ENCODE measurements at regions of chr7 and their contacts with region 1.

Region 1: DNA sequence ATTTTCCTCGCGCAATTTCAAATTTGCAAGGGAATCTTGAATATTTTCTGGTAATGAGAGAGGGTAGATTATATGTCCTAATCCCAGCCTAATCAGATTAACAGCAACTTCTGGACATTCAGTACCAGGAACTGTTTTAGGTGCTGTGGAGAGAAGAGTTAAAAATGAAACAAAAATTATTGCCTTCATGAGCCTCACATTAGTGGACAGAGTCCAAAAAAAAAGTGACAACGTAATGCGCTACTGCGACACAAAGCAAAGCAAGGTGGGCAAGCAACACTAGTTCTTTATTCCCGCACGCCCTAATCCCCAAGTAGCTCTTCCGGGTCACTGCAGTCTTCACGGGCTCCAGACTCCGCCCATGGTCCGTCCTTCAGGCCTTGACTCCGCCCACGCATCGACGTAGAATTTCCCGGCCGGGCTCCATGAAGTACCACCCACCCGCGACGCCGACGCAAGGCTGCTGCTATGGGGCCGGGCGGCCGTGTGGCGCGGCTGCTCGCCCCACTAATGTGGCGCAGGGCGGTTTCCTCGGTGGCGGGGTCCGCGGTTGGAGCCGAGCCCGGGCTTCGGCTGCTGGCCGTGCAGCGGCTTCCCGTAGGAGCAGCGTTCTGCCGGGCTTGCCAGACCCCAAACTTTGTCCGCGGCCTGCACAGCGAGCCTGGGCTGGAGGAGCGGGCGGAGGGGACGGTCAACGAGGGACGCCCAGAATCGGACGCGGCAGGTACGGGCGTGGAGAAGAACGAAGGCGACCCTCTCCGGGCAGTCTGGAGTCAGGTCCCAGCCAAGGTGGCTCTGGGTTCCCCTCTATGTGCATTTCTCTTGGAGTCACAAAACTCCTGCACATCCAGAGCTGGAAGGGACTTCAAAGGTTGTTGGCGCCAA is at the start of gene MALSU1:
- DNase-seq: peak; percentile 90 to 96 (median 94)
- ATAC-seq: peak; percentile 100
- H3K4me3 ChIP-seq: peak within 1 kb of the TSS; percentile 96
- H3K4me3 Mint-ChIP-seq: peak within 1 kb of the TSS; percentile 90 to 97 (median 94)
- H3K27ac ChIP-seq: peak within 1 kb of the TSS; percentile 92
- H3K27ac Mint-ChIP-seq: peak within 1 kb of the TSS; percentile 96 to 100 (median 98)
- H3K4me1 ChIP-seq: peaks cover 14 to 23% of the 10 kb centered on the region in 2 donors
- H3K4me1 Mint-ChIP-seq: peaks cover 34 to 55% (median 48%) of the 10 kb centered on the region in 7 donors
- H3K27me3 ChIP-seq: no peaks in the 10 kb centered on the region
- H3K27me3 Mint-ChIP-seq: peaks cover 0 to 10% (median 0%) of the 10 kb centered on the region in 5 donors
- total RNA-seq, gene MALSU1: 32.7 to 48.3 (median 44.8) TPM

Region 2: GRCh38 chr7:23181684-23182553 is 117.2 kb before region 1 on chr7 and contains the start of gene NUP42:
- CTCF ChIA-PET with region 1: no interaction called
- POLR2A ChIA-PET with region 1: no interaction called
- intact Hi-C with region 1: loop called (anchors 1 kb)
- DNase-seq: peak; percentile 87 to 95 (median 93)
- ATAC-seq: peak; percentile 97
- H3K4me3 ChIP-seq: peak within 1 kb of the TSS; percentile 86
- H3K4me3 Mint-ChIP-seq: peak within 1 kb of the TSS; percentile 95 to 100 (median 98)
- H3K27ac ChIP-seq: peak within 1 kb of the TSS; percentile 85
- H3K27ac Mint-ChIP-seq: peak within 1 kb of the TSS; percentile 97 to 99 (median 98)
- H3K4me1 ChIP-seq: peaks cover 16 to 17% of the 10 kb centered on the region in 2 donors
- H3K4me1 Mint-ChIP-seq: peaks cover 20 to 50% (median 43%) of the 10 kb centered on the region in 7 donors
- H3K27me3 ChIP-seq: no peaks in the 10 kb centered on the region
- H3K27me3 Mint-ChIP-seq: peaks cover 0 to 16% (median 0%) of the 10 kb centered on the region in 5 donors
- total RNA-seq, gene NUP42: 19.8 to 37.7 (median 27.5) TPM

Region 3: GRCh38 chr7:23347682-23348180 is 48.6 kb after region 1 on chr7:
- CTCF ChIA-PET with region 1: no interaction called
- POLR2A ChIA-PET with region 1: interaction called, 21 read pairs
- intact Hi-C with region 1: loop called (anchors 1 to 2 kb)
- DNase-seq: no peak
- ATAC-seq: peak; percentile 66
- H3K4me3 ChIP-seq: no peak overlapping the region
- H3K4me3 Mint-ChIP-seq: peak overlapping the region in 7 of 10 donors; percentile 63 to 87 (median 83)
- H3K27ac ChIP-seq: no peak overlapping the region
- H3K27ac Mint-ChIP-seq: peak overlapping the region in 6 of 9 donors; percentile 57 to 94 (median 80)
- H3K4me1 ChIP-seq: peaks cover 6 to 11% of the 10 kb centered on the region in 2 donors
- H3K4me1 Mint-ChIP-seq: peaks cover 9 to 36% (median 24%) of the 10 kb centered on the region in 7 donors
- H3K27me3 ChIP-seq: no peaks in the 10 kb centered on the region
- H3K27me3 Mint-ChIP-seq: peaks cover 0 to 39% (median 0%) of the 10 kb centered on the region in 5 donors

Region 4: GRCh38 chr7:23490357-23491135 is 191.4 kb after region 1 on chr7:
- CTCF ChIA-PET with region 1: no interaction called
- POLR2A ChIA-PET with region 1: interaction called, 3 read pairs
- intact Hi-C with region 1: loop called in 1 of 2 experiments (anchors 1 kb)
- DNase-seq: peak; percentile 39 to 73 (median 62)
- ATAC-seq: peak; percentile 97
- H3K4me3 ChIP-seq: peak overlapping the region; percentile 69
- H3K4me3 Mint-ChIP-seq: peak overlapping the region; percentile 81 to 90 (median 85)
- H3K27ac ChIP-seq: peak overlapping the region; percentile 63
- H3K27ac Mint-ChIP-seq: peak overlapping the region; percentile 74 to 92 (median 84)
- H3K4me1 ChIP-seq: peaks cover 4 to 6% of the 10 kb centered on the region in 2 donors
- H3K4me1 Mint-ChIP-seq: peaks cover 3 to 13% (median 10%) of the 10 kb centered on the region in 7 donors
- H3K27me3 ChIP-seq: no peaks in the 10 kb centered on the region
- H3K27me3 Mint-ChIP-seq: no peaks in the 10 kb centered on the region

Region 5: GRCh38 chr7:23546897-23547572 is 247.9 kb after region 1 on chr7:
- CTCF ChIA-PET with region 1: interaction called, 3 read pairs
- POLR2A ChIA-PET with region 1: interaction called, 5 read pairs
- intact Hi-C with region 1: loop called in 1 of 2 experiments (anchors 1 kb)
- DNase-seq: peak; percentile 37 to 89 (median 82)
- ATAC-seq: peak; percentile 98
- H3K4me3 ChIP-seq: no peak overlapping the region
- H3K4me3 Mint-ChIP-seq: no peak overlapping the region
- H3K27ac ChIP-seq: no peak overlapping the region
- H3K27ac Mint-ChIP-seq: peak overlapping the region in 6 of 9 donors; percentile 22 to 90 (median 40)
- H3K4me1 ChIP-seq: no peaks in the 10 kb centered on the region
- H3K4me1 Mint-ChIP-seq: peaks cover 0 to 14% (median 5%) of the 10 kb centered on the region in 7 donors
- H3K27me3 ChIP-seq: no peaks in the 10 kb centered on the region
- H3K27me3 Mint-ChIP-seq: peaks cover 0 to 5% (median 0%) of the 10 kb centered on the region in 5 donors

Region 6: GRCh38 chr7:23679898-23680413 is 380.8 kb after region 1 on chr7 and contains the start of gene FAM221A:
- CTCF ChIA-PET with region 1: no interaction called
- POLR2A ChIA-PET with region 1: no interaction called
- intact Hi-C with region 1: loop called in 1 of 2 experiments (anchors 1 kb)
- DNase-seq: peak; percentile 52 to 80 (median 72)
- ATAC-seq: peak; percentile 99
- H3K4me3 ChIP-seq: peak within 1 kb of the TSS; percentile 95
- H3K4me3 Mint-ChIP-seq: peak within 1 kb of the TSS; percentile 89 to 98 (median 94)
- H3K27ac ChIP-seq: peak within 1 kb of the TSS; percentile 65
- H3K27ac Mint-ChIP-seq: peak within 1 kb of the TSS; percentile 45 to 90 (median 86)
- H3K4me1 ChIP-seq: no peaks in the 10 kb centered on the region
- H3K4me1 Mint-ChIP-seq: peaks cover 0 to 32% (median 13%) of the 10 kb centered on the region in 7 donors
- H3K27me3 ChIP-seq: no peaks in the 10 kb centered on the region
- H3K27me3 Mint-ChIP-seq: peaks cover 0 to 21% (median 3%) of the 10 kb centered on the region in 5 donors
- total RNA-seq, gene FAM221A: 4.0 to 8.1 (median 5.3) TPM

Measured in naive thymus-derived CD4-positive, alpha-beta T cell (primary cell).